CD4-positive, alpha-beta memory T cell (primary cell): ENCODE measurements at regions of chr1 and their contacts with region 1.

Region 1: GRCh38 chr1:159798893-159799292 is 3.3 kb upstream of the FCRL6 start:
- DNase-seq: peak in 4 of 5 donors; percentile 35 to 48 (median 42)
- H3K4me3 ChIP-seq: no peak overlapping the region
- H3K4me3 Mint-ChIP-seq: peak overlapping the region in 1 of 8 donors; percentile 18
- H3K27ac ChIP-seq: no peak overlapping the region
- H3K27ac Mint-ChIP-seq: peak overlapping the region in 1 of 7 donors; percentile 36
- H3K4me1 ChIP-seq: peaks cover 23% of the 10 kb centered on the region
- H3K4me1 Mint-ChIP-seq: peaks cover 22 to 39% (median 28%) of the 10 kb centered on the region in 4 donors
- H3K27me3 ChIP-seq: no peaks in the 10 kb centered on the region
- H3K27me3 Mint-ChIP-seq: peaks cover 2 to 6% of the 10 kb centered on the region in 2 donors

Region 2: GRCh38 chr1:159132271-159132881 is 666.5 kb before region 1 on chr1:
- CTCF ChIA-PET with region 1: no interaction called
- POLR2A ChIA-PET with region 1: no interaction called
- intact Hi-C with region 1: loop called (anchors 10 kb)
- DNase-seq: peak; percentile 41 to 59 (median 49)
- H3K4me3 ChIP-seq: no peak overlapping the region
- H3K4me3 Mint-ChIP-seq: no peak overlapping the region
- H3K27ac ChIP-seq: no peak overlapping the region
- H3K27ac Mint-ChIP-seq: no peak overlapping the region
- H3K4me1 ChIP-seq: no peaks in the 10 kb centered on the region
- H3K4me1 Mint-ChIP-seq: no peaks in the 10 kb centered on the region
- H3K27me3 ChIP-seq: no peaks in the 10 kb centered on the region
- H3K27me3 Mint-ChIP-seq: peaks cover 4 to 12% of the 10 kb centered on the region in 2 donors

Region 3: DNA sequence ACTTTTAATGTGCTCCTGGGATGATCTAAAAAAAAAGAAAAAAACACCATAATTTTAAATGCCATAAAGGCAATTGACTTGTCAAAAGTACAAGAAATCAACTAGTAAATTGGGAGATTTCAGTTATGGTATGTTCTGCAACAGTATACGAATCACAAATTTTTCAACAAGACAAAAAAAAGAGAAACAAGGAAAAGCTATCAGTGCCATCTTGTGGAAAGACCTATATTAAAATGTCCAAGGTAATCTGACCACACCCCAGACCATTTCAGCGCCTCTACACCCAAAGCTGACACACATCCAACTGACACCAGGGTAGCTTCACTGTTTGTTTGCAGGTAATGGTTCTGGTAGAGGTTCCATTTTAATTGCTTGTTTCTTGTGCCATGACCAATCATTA is 23.2 kb before region 1 on chr1:
- CTCF ChIA-PET with region 1: interaction called, 42 read pairs
- POLR2A ChIA-PET with region 1: interaction called, 7 read pairs
- intact Hi-C with region 1: loop called (anchors 1 kb)
- DNase-seq: no peak
- H3K4me3 ChIP-seq: no peak overlapping the region
- H3K4me3 Mint-ChIP-seq: no peak overlapping the region
- H3K27ac ChIP-seq: no peak overlapping the region
- H3K27ac Mint-ChIP-seq: no peak overlapping the region
- H3K4me1 ChIP-seq: peaks cover 11% of the 10 kb centered on the region
- H3K4me1 Mint-ChIP-seq: peaks cover 4 to 18% (median 10%) of the 10 kb centered on the region in 4 donors
- H3K27me3 ChIP-seq: no peaks in the 10 kb centered on the region
- H3K27me3 Mint-ChIP-seq: no peaks in the 10 kb centered on the region

Region 4: DNA sequence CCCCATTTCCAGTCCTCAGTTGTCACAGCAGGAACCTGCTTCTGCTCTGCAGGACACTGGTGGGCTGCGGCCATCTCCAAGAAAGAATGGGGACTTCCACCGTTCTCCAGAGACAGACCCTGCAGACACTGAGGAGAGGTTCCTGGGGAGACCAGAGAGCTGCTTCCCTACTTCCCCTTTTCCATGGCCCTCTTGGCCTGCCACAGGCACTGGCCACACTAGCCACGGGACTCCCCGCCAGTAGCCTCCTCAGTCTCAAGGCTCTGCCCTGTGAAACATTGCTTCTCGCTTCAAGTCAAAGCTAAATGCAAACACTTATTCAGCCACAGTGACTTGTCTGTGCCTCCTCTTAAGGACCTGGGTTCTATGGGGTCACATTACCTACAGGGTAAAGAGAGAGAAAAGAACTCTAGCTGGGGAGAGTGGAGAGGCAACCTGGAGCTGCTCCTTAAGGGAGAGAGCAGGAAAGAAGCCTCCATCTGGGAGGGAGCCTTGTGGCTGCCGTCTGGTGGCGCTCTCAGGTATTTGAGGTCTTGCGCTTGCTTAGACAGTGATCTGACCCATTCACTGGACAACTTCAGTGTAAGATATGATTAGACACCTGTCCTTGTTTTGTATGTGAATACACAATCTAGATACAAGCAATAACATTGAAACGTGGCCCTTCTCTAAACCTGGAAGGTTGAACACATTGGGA is 22.4 kb after region 1 on chr1:
- CTCF ChIA-PET with region 1: interaction called, 12 read pairs
- POLR2A ChIA-PET with region 1: interaction called, 7 read pairs
- intact Hi-C with region 1: no loop called
- DNase-seq: no peak
- H3K4me3 ChIP-seq: no peak overlapping the region
- H3K4me3 Mint-ChIP-seq: no peak overlapping the region
- H3K27ac ChIP-seq: no peak overlapping the region
- H3K27ac Mint-ChIP-seq: peak overlapping the region in 1 of 7 donors; percentile 39
- H3K4me1 ChIP-seq: peaks cover 16% of the 10 kb centered on the region
- H3K4me1 Mint-ChIP-seq: peaks cover 13 to 24% (median 21%) of the 10 kb centered on the region in 4 donors
- H3K27me3 ChIP-seq: no peaks in the 10 kb centered on the region
- H3K27me3 Mint-ChIP-seq: no peaks in the 10 kb centered on the region

Region 5: DNA sequence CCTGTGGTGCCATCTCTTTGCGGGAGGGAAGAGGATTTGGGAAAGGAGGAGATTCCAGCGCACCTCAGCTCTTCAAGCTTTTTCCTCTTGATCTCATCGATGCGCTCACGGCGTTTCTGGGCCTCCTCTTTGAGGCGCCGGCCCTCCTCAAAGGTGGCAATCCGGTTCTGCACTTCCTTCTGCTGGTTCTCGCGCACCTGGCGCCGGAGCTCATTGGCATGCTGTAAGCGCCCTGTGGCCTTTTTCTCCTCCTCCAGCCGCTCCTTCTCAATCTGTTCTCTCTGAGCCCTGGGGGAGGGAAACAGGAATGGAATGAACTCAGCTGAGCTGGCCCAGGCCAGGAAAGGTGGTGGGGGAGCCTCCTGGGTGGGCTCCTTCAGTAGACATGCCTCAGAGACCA is 74.0 kb after region 1 on chr1:
- CTCF ChIA-PET with region 1: interaction called, 20 read pairs
- POLR2A ChIA-PET with region 1: interaction called, 4 read pairs
- intact Hi-C with region 1: no loop called
- DNase-seq: no peak
- H3K4me3 ChIP-seq: no peak overlapping the region
- H3K4me3 Mint-ChIP-seq: no peak overlapping the region
- H3K27ac ChIP-seq: no peak overlapping the region
- H3K27ac Mint-ChIP-seq: no peak overlapping the region
- H3K4me1 ChIP-seq: no peaks in the 10 kb centered on the region
- H3K4me1 Mint-ChIP-seq: peaks cover 0 to 3% (median 0%) of the 10 kb centered on the region in 4 donors
- H3K27me3 ChIP-seq: no peaks in the 10 kb centered on the region
- H3K27me3 Mint-ChIP-seq: peaks cover 0 to 3% of the 10 kb centered on the region in 2 donors

Region 6: DNA sequence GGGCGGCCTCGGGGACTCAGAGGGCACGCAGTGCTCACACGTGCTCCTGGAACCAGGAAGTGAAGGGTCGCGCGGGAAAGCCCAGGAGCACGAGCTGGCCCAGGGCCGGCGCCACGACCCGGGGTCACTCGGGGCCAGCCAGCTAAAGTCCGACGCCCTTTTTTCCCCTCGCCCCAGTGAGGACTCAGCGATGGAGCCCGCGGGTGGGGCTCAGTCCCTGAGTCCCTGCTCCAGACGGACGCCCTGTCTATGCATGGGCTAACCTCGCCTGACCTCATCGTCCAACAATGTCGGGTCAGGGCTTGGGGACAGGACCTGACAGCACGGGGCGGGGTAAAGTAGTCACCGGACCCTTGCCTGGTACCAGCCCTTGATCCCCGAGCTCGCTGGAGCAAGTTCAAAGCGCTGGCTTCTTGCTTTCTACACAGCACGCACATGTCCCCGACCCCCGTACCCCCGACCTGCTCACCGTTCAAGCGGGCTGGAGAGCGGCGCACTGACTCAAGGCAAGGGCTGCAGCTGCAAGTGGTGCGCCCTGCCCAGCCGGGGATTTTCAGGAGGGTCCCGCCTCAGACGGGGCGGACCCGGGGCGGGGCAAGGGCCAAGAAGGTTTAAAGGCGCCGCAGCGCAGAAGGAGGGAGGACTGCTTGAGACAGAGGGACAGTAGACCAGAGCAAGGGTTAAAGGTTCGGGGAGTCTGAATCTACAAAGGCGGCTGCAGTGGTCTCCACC is 126.3 kb after region 1 on chr1 and contains the start of gene TAGLN2:
- CTCF ChIA-PET with region 1: interaction called, 18 read pairs
- POLR2A ChIA-PET with region 1: interaction called, 26 read pairs
- intact Hi-C with region 1: no loop called
- DNase-seq: peak; percentile 87 to 91 (median 89)
- H3K4me3 ChIP-seq: peak within 1 kb of the TSS; percentile 89 to 93
- H3K4me3 Mint-ChIP-seq: peak within 1 kb of the TSS; percentile 94 to 99 (median 98)
- H3K27ac ChIP-seq: peak within 1 kb of the TSS; percentile 98
- H3K27ac Mint-ChIP-seq: peak within 1 kb of the TSS; percentile 99 to 100 (median 100)
- H3K4me1 ChIP-seq: peaks cover 41% of the 10 kb centered on the region
- H3K4me1 Mint-ChIP-seq: peaks cover 29 to 63% (median 41%) of the 10 kb centered on the region in 4 donors
- H3K27me3 ChIP-seq: no peaks in the 10 kb centered on the region
- H3K27me3 Mint-ChIP-seq: peaks cover 0 to 5% of the 10 kb centered on the region in 2 donors
- total RNA-seq, gene TAGLN2: 196 to 207 TPM

Region 7: DNA sequence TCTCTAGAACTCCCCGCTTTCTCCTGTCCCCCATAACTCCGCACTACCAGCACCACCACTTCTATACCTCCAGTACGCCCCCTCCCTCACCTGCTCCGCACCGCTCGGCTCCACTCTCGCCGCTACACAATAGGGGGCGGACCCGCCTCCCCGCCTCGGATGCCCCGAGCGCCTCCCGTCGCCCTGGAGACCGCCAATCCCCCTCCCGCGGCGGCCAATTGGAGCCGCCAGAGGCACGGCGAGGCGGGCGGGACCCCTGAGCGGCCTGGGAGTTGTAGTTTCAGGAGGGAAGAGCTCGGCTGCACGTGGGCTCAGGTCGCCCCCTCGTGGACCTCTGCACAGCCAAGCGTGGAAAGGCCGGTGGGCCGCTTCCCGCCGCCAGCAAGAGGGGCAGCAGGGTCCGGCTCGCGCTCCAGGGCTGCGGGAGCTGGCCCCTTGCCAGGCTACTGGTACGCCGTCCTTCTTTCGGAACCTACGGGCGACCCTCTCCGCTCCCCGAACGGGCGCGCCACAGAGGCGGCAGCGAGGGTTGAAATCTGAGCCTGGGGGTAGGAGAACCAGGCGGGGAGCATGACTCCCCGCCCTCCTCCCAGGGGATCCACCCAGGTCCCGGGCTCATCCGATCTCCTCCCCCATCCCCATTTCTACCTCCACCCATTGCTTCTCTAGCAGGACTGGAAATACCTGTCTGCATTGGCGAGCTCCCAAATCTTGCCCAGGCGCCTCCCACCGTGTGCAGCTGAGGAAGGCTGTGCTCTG is 146.8 kb after region 1 on chr1 and contains the start of gene IGSF9:
- CTCF ChIA-PET with region 1: interaction called, 17 read pairs
- POLR2A ChIA-PET with region 1: no interaction called
- intact Hi-C with region 1: loop called (anchors 1 kb)
- DNase-seq: peak; percentile 68 to 79 (median 71)
- H3K4me3 ChIP-seq: peak within 1 kb of the TSS in 1 of 2 donors; percentile 38
- H3K4me3 Mint-ChIP-seq: peak within 1 kb of the TSS; percentile 32 to 86 (median 68)
- H3K27ac ChIP-seq: no peak within 1 kb of the TSS
- H3K27ac Mint-ChIP-seq: peak within 1 kb of the TSS in 3 of 7 donors; percentile 12 to 87 (median 65)
- H3K4me1 ChIP-seq: peaks cover 13% of the 10 kb centered on the region
- H3K4me1 Mint-ChIP-seq: peaks cover 8 to 12% (median 10%) of the 10 kb centered on the region in 4 donors
- H3K27me3 ChIP-seq: peaks cover 21% of the 10 kb centered on the region
- H3K27me3 Mint-ChIP-seq: peaks cover 25 to 35% of the 10 kb centered on the region in 2 donors
- total RNA-seq, gene IGSF9: not detected

Region 8: GRCh38 chr1:160046494-160047110 is 247.7 kb after region 1 on chr1:
- CTCF ChIA-PET with region 1: no interaction called
- POLR2A ChIA-PET with region 1: no interaction called
- intact Hi-C with region 1: no loop called
- DNase-seq: peak; percentile 27 to 48 (median 47)
- H3K4me3 ChIP-seq: no peak overlapping the region
- H3K4me3 Mint-ChIP-seq: peak overlapping the region; percentile 57 to 79 (median 70)
- H3K27ac ChIP-seq: no peak overlapping the region
- H3K27ac Mint-ChIP-seq: peak overlapping the region in 3 of 7 donors; percentile 31 to 62 (median 62)
- H3K4me1 ChIP-seq: peaks cover 10% of the 10 kb centered on the region
- H3K4me1 Mint-ChIP-seq: peaks cover 6 to 12% (median 9%) of the 10 kb centered on the region in 4 donors
- H3K27me3 ChIP-seq: no peaks in the 10 kb centered on the region
- H3K27me3 Mint-ChIP-seq: peaks cover 12 to 18% of the 10 kb centered on the region in 2 donors